CD4-positive, alpha-beta T cell (primary cell): ENCODE measurements at regions of chr6 and their contacts with region 1.

Region 1: DNA sequence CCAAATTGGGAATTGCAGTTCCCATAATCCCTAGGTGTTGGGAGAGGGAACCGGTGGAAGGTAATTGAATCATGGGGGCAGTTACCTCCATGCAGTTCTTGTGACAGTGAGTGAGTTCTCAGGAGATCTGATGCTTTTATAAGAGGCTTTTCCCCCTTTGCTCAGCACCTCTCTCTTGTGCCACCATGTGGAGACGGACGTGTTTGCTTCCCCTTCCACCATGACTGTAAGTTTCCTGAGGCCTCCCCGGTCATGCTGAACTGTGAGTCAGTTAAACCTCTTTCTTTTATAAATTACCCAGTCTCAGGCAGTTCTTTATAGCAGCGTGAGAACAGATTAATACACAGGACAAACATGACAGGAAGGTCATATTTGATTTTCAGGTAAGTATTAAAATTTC is 25.3 kb upstream of the HECA start:
- DNase-seq: peak in 6 of 14 experiments; percentile 14 to 62 (median 43)
- ATAC-seq: no peak
- H3K4me3 ChIP-seq: no peak overlapping the region
- H3K4me3 Mint-ChIP-seq: no peak overlapping the region
- H3K27ac ChIP-seq: no peak overlapping the region
- H3K27ac Mint-ChIP-seq: peak overlapping the region; percentile 83
- H3K4me1 ChIP-seq: peaks cover 36% of the 10 kb centered on the region
- H3K4me1 Mint-ChIP-seq: peaks cover 59% of the 10 kb centered on the region
- H3K27me3 ChIP-seq: no peaks in the 10 kb centered on the region
- H3K27me3 Mint-ChIP-seq: no peaks in the 10 kb centered on the region
- CTCF ChIP-seq: peak; percentile 26

Region 2: DNA sequence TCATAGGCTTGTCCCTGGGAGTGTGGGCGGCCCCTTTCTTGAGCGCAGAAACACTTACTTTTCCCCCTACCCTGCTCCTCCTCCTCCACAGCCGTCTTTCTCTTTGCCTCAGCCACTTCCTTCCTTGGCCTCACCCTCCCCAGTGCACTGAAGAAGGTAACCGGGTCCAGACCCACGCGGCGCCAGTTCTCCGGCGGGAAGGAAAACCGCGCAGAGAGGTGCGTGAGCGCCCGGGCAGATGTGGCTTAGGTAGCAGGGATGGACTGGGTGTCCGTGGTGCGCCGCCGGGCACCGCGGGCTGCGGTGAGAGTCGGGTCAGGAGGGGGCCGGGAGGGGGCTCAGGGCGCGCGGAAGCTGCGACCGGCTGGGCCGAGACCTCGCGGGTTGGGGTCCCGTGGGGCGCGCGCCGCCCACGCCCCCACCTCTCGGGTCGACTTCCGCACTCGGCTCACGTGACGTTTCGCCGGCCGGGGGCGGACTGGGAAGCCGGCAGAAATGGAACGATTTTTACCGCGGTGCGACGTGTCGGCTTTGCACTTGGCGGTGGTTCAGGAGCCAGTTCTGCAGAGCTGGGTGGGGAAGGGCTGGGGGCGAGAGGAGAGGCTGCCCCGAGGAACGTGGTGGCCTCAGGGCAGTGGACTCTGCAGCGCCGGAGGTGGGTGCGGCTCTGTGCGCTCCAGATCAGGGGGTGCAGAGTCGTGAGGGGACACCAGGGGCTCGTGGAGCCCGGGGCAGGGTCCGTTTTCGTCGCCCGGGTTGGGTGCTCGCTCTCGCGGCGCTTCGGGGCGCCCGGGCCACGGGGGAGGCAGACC is 80.7 kb before region 1 on chr6 and contains the start of gene ABRACL:
- CTCF ChIA-PET with region 1: no interaction called
- POLR2A ChIA-PET with region 1: interaction called, 48 read pairs
- intact Hi-C with region 1: loop called in 1 of 2 experiments (anchors 5 kb)
- DNase-seq: peak; percentile 48 to 88 (median 69)
- ATAC-seq: peak; percentile 89
- H3K4me3 ChIP-seq: peak within 1 kb of the TSS; percentile 85
- H3K4me3 Mint-ChIP-seq: peak within 1 kb of the TSS; percentile 97
- H3K27ac ChIP-seq: peak within 1 kb of the TSS; percentile 84 to 90
- H3K27ac Mint-ChIP-seq: peak within 1 kb of the TSS; percentile 96
- H3K4me1 ChIP-seq: peaks cover 20% of the 10 kb centered on the region
- H3K4me1 Mint-ChIP-seq: peaks cover 35% of the 10 kb centered on the region
- H3K27me3 ChIP-seq: no peaks in the 10 kb centered on the region
- H3K27me3 Mint-ChIP-seq: no peaks in the 10 kb centered on the region
- CTCF ChIP-seq: no peak
- total RNA-seq, gene ABRACL: 36.8 to 40.6 TPM

Region 3: GRCh38 chr6:139124887-139125672 is 15.5 kb after region 1 on chr6:
- CTCF ChIA-PET with region 1: interaction called, 12 read pairs
- POLR2A ChIA-PET with region 1: interaction called, 72 read pairs
- intact Hi-C with region 1: no loop called
- DNase-seq: peak; percentile 60 to 95 (median 76)
- ATAC-seq: peak; percentile 98
- H3K4me3 ChIP-seq: peak overlapping the region; percentile 1
- H3K4me3 Mint-ChIP-seq: peak overlapping the region; percentile 66
- H3K27ac ChIP-seq: peak overlapping the region; percentile 64 to 66
- H3K27ac Mint-ChIP-seq: peak overlapping the region; percentile 88
- H3K4me1 ChIP-seq: peaks cover 40% of the 10 kb centered on the region
- H3K4me1 Mint-ChIP-seq: peaks cover 57% of the 10 kb centered on the region
- H3K27me3 ChIP-seq: no peaks in the 10 kb centered on the region
- H3K27me3 Mint-ChIP-seq: no peaks in the 10 kb centered on the region
- CTCF ChIP-seq: peak; percentile 80

Region 4: GRCh38 chr6:139146317-139146726 is 36.8 kb after region 1 on chr6:
- CTCF ChIA-PET with region 1: interaction called, 4 read pairs
- POLR2A ChIA-PET with region 1: interaction called, 11 read pairs
- intact Hi-C with region 1: no loop called
- DNase-seq: peak in 1 of 14 experiments; percentile 38
- ATAC-seq: no peak
- H3K4me3 ChIP-seq: peak overlapping the region; percentile 29
- H3K4me3 Mint-ChIP-seq: peak overlapping the region; percentile 61
- H3K27ac ChIP-seq: peak overlapping the region in 1 of 2 donors; percentile 11
- H3K27ac Mint-ChIP-seq: peak overlapping the region; percentile 80
- H3K4me1 ChIP-seq: peaks cover 76% of the 10 kb centered on the region
- H3K4me1 Mint-ChIP-seq: peaks cover 95% of the 10 kb centered on the region
- H3K27me3 ChIP-seq: no peaks in the 10 kb centered on the region
- H3K27me3 Mint-ChIP-seq: no peaks in the 10 kb centered on the region
- CTCF ChIP-seq: no peak

Region 5: DNA sequence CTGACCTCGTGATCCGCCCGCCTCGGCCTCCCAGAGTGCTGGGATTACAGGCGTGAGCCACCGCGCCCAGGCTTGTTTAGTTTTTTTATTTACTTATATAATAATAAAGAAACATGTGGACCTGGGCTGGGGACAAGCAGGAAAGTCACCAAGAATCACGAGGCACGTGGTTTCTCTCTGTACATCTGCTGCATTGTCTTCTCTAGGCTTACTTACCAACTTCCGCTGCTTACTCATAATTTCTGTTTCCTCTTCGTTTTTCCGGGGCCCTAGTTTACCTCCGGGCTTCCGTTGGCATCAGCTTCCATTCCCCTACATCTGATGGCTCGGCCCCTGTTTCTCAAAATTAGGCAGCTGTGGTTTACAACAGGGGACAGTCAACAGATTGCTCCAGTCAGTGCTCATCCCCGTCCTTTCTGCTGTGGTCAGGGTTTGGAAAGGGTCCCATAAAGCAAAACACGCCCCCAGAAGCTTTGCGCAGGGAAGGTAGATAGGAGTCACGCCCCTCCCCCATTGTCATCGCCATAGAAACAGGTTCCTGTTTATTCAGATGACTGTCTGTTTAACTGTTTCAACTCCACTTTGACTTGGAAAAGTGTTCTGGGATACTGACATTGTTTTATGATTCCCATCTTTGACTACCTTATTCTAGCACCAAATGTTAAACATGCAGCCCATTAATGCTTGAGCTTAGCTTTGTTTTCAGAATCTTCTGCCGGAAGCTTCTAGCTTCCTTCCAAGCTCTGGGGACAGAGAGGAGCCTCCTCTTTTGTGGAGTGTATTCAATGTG is 214.1 kb after region 1 on chr6:
- CTCF ChIA-PET with region 1: interaction called, 4 read pairs
- POLR2A ChIA-PET with region 1: interaction called, 10 read pairs
- intact Hi-C with region 1: no loop called
- DNase-seq: peak; percentile 61 to 92 (median 72)
- ATAC-seq: peak; percentile 86
- H3K4me3 ChIP-seq: peak overlapping the region; percentile 57
- H3K4me3 Mint-ChIP-seq: peak overlapping the region; percentile 93
- H3K27ac ChIP-seq: peak overlapping the region; percentile 91 to 97
- H3K27ac Mint-ChIP-seq: peak overlapping the region; percentile 99
- H3K4me1 ChIP-seq: peaks cover 30% of the 10 kb centered on the region
- H3K4me1 Mint-ChIP-seq: peaks cover 50% of the 10 kb centered on the region
- H3K27me3 ChIP-seq: no peaks in the 10 kb centered on the region
- H3K27me3 Mint-ChIP-seq: no peaks in the 10 kb centered on the region
- CTCF ChIP-seq: no peak